Activated CD8-positive, alpha-beta T cell treated with anti-CD3 and anti-CD28 coated beads for 36 hours (primary cell): ENCODE measurements at regions of chr4 and their contacts with region 1.

Region 1: GRCh38 chr4:173013232-173013930 is 155.2 kb upstream of the GALNT7 start:
- DNase-seq: peak; percentile 67
- ATAC-seq: peak; percentile 58
- H3K4me3 Mint-ChIP-seq: no peak overlapping the region
- H3K27ac Mint-ChIP-seq: no peak overlapping the region
- H3K4me1 Mint-ChIP-seq: no peaks in the 10 kb centered on the region
- H3K27me3 Mint-ChIP-seq: peaks cover 2% of the 10 kb centered on the region
- CTCF ChIP-seq: peak; percentile 74

Region 2: GRCh38 chr4:172489861-172490260 is 523.5 kb before region 1 on chr4:
- CTCF ChIA-PET with region 1: no interaction called
- POLR2A ChIA-PET with region 1: no interaction called
- intact Hi-C with region 1: no loop called
- DNase-seq: no peak
- ATAC-seq: no peak
- H3K4me3 Mint-ChIP-seq: no peak overlapping the region
- H3K27ac Mint-ChIP-seq: no peak overlapping the region
- H3K4me1 Mint-ChIP-seq: no peaks in the 10 kb centered on the region
- H3K27me3 Mint-ChIP-seq: no peaks in the 10 kb centered on the region
- CTCF ChIP-seq: no peak

Region 3: GRCh38 chr4:172938885-172939284 is 74.5 kb before region 1 on chr4:
- CTCF ChIA-PET with region 1: no interaction called
- POLR2A ChIA-PET with region 1: no interaction called
- intact Hi-C with region 1: no loop called
- DNase-seq: no peak
- ATAC-seq: no peak
- H3K4me3 Mint-ChIP-seq: no peak overlapping the region
- H3K27ac Mint-ChIP-seq: no peak overlapping the region
- H3K4me1 Mint-ChIP-seq: no peaks in the 10 kb centered on the region
- H3K27me3 Mint-ChIP-seq: peaks cover 4% of the 10 kb centered on the region
- CTCF ChIP-seq: no peak

Region 4: DNA sequence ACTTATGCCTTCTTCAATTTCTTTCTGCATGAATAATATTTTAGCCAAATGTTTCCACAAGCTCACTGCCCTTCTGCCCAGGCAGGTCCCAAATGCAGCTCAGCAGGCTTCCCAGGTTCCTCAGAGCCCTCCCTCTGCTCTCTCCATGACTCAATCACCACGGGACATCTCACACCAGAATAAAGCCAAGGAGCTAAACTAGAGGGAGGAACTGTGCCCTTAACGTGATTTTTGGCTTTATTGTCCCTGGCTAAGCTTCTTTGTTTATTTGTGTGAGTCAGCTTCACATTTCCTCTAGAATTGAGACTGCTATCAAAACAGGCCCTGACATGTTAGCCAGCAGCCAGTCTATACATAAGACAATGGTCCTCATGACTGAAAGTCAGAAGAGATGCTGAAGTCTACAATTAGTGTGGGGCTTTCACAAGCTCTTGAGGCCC is 31.2 kb before region 1 on chr4:
- CTCF ChIA-PET with region 1: no interaction called
- POLR2A ChIA-PET with region 1: no interaction called
- intact Hi-C with region 1: no loop called
- DNase-seq: no peak
- ATAC-seq: no peak
- H3K4me3 Mint-ChIP-seq: no peak overlapping the region
- H3K27ac Mint-ChIP-seq: no peak overlapping the region
- H3K4me1 Mint-ChIP-seq: no peaks in the 10 kb centered on the region
- H3K27me3 Mint-ChIP-seq: peaks cover 6% of the 10 kb centered on the region
- CTCF ChIP-seq: no peak

Region 5: DNA sequence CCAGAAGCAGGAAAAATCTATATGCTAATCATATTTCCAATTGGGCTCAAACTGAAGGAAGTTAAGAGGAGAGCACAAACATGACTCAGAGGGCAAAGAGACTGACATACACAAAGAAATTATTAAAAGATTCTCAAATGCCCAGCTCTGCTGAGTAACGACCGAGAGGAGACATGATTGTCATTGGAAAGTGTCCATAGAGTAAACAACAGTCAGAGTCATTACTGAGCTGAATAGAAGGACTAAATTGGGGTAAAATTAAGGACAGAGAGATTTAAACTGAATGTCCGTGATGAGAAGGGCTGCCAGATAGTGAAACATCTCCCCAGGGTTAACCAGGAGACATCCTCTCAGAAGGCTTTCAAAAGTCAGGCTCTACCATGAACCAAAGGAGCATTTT is 44.1 kb after region 1 on chr4:
- CTCF ChIA-PET with region 1: interaction called, 11 read pairs
- POLR2A ChIA-PET with region 1: no interaction called
- intact Hi-C with region 1: no loop called
- DNase-seq: no peak
- ATAC-seq: no peak
- H3K4me3 Mint-ChIP-seq: no peak overlapping the region
- H3K27ac Mint-ChIP-seq: no peak overlapping the region
- H3K4me1 Mint-ChIP-seq: no peaks in the 10 kb centered on the region
- H3K27me3 Mint-ChIP-seq: no peaks in the 10 kb centered on the region
- CTCF ChIP-seq: no peak

Region 6: GRCh38 chr4:173252024-173252935 is 238.9 kb after region 1 on chr4:
- CTCF ChIA-PET with region 1: interaction called, 70 read pairs
- POLR2A ChIA-PET with region 1: no interaction called
- intact Hi-C with region 1: loop called (anchors 1 kb)
- DNase-seq: peak; percentile 61
- ATAC-seq: peak; percentile 89
- H3K4me3 Mint-ChIP-seq: no peak overlapping the region
- H3K27ac Mint-ChIP-seq: no peak overlapping the region
- H3K4me1 Mint-ChIP-seq: peaks cover 4% of the 10 kb centered on the region
- H3K27me3 Mint-ChIP-seq: no peaks in the 10 kb centered on the region
- CTCF ChIP-seq: no peak

Region 7: GRCh38 chr4:173264684-173265185 is 251.4 kb after region 1 on chr4:
- CTCF ChIA-PET with region 1: interaction called, 30 read pairs
- POLR2A ChIA-PET with region 1: no interaction called
- intact Hi-C with region 1: no loop called
- DNase-seq: peak; percentile 26
- ATAC-seq: peak; percentile 49
- H3K4me3 Mint-ChIP-seq: peak overlapping the region; percentile 0
- H3K27ac Mint-ChIP-seq: no peak overlapping the region
- H3K4me1 Mint-ChIP-seq: peaks cover 24% of the 10 kb centered on the region
- H3K27me3 Mint-ChIP-seq: no peaks in the 10 kb centered on the region
- CTCF ChIP-seq: no peak

Region 8: GRCh38 chr4:173280998-173281397 is 267.6 kb after region 1 on chr4:
- CTCF ChIA-PET with region 1: interaction called, 25 read pairs
- POLR2A ChIA-PET with region 1: no interaction called
- intact Hi-C with region 1: no loop called
- DNase-seq: no peak
- ATAC-seq: no peak
- H3K4me3 Mint-ChIP-seq: no peak overlapping the region
- H3K27ac Mint-ChIP-seq: no peak overlapping the region
- H3K4me1 Mint-ChIP-seq: peaks cover 4% of the 10 kb centered on the region
- H3K27me3 Mint-ChIP-seq: no peaks in the 10 kb centered on the region
- CTCF ChIP-seq: no peak

Region 9: GRCh38 chr4:173307778-173308177 is 294.4 kb after region 1 on chr4:
- CTCF ChIA-PET with region 1: interaction called, 29 read pairs
- POLR2A ChIA-PET with region 1: no interaction called
- intact Hi-C with region 1: no loop called
- DNase-seq: no peak
- ATAC-seq: no peak
- H3K4me3 Mint-ChIP-seq: no peak overlapping the region
- H3K27ac Mint-ChIP-seq: no peak overlapping the region
- H3K4me1 Mint-ChIP-seq: no peaks in the 10 kb centered on the region
- H3K27me3 Mint-ChIP-seq: no peaks in the 10 kb centered on the region
- CTCF ChIP-seq: no peak

Region 10: GRCh38 chr4:173420324-173420752 is 407.0 kb after region 1 on chr4:
- CTCF ChIA-PET with region 1: interaction called, 14 read pairs
- POLR2A ChIA-PET with region 1: no interaction called
- intact Hi-C with region 1: loop called (anchors 5 kb)
- DNase-seq: no peak
- ATAC-seq: no peak
- H3K4me3 Mint-ChIP-seq: no peak overlapping the region
- H3K27ac Mint-ChIP-seq: no peak overlapping the region
- H3K4me1 Mint-ChIP-seq: peaks cover 6% of the 10 kb centered on the region
- H3K27me3 Mint-ChIP-seq: no peaks in the 10 kb centered on the region
- CTCF ChIP-seq: peak; percentile 42

Region 11: GRCh38 chr4:173685165-173685830 is 671.9 kb after region 1 on chr4:
- CTCF ChIA-PET with region 1: no interaction called
- POLR2A ChIA-PET with region 1: no interaction called
- intact Hi-C with region 1: no loop called
- DNase-seq: no peak
- ATAC-seq: no peak
- H3K4me3 Mint-ChIP-seq: no peak overlapping the region
- H3K27ac Mint-ChIP-seq: no peak overlapping the region
- H3K4me1 Mint-ChIP-seq: no peaks in the 10 kb centered on the region
- H3K27me3 Mint-ChIP-seq: peaks cover 2% of the 10 kb centered on the region
- CTCF ChIP-seq: no peak